Dendritic cell treated with granulocyte-macrophage colony-stimulating factor and Interleukin-4, amounts not matched to agents 40 ng/mL and 50 ng/mL, for 4 days (primary cell): ENCODE measurements at regions of chrX and their contacts with region 1.

Region 1: GRCh38 chrX:20382518-20383297 is 116.0 kb upstream of the RPS6KA3 start:
- H3K4me3 Mint-ChIP-seq: no peak overlapping the region
- H3K27ac Mint-ChIP-seq: no peak overlapping the region
- H3K4me1 Mint-ChIP-seq: no peaks in the 10 kb centered on the region
- H3K27me3 Mint-ChIP-seq: peaks cover 1% of the 10 kb centered on the region

Region 2: DNA sequence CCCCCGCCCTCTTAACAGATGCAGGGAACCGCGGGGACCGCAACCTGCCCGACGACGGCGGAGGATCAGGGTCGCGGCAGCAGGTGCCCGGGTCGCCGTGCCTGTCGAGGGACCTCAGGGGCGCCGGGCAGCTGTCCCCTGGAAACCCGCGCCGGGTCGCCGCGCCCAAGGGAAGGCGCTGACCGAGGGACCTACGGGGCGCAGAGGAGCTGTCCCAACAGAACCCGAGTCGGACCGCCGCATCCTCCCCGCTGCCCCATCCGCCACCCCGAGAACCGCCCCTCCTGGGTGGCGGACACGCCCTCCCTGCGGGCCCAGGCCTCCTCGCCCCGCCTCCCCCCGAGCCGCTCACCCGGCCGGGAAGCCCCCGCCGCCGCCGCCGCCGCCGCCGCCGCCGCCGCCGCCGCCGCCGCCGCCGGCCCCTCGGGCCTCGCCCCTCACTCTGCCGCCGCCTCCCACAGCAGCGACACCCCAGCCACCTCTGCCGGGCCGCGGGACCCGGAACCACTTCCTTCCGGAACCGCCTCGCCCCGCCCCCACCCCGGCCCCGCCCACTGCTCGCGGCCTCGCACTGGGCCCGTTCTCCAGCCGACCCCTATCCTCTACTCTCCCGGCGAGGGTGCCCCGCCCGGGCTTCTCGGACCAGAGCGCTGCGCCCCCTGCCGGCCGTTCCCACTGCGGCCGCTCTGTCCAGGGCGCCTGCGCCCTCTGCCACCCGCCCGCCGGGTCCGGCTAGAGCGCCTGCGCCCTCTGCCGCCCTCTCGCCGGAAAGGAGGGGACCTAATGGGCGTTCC is 392.0 kb before region 1 on chrX and contains the start of gene BCLAF3:
- intact Hi-C with region 1: no loop called
- H3K4me3 Mint-ChIP-seq: peak within 1 kb of the TSS; percentile 78
- H3K27ac Mint-ChIP-seq: peak within 1 kb of the TSS; percentile 82
- H3K4me1 Mint-ChIP-seq: peaks cover 18% of the 10 kb centered on the region
- H3K27me3 Mint-ChIP-seq: no peaks in the 10 kb centered on the region

Region 3: DNA sequence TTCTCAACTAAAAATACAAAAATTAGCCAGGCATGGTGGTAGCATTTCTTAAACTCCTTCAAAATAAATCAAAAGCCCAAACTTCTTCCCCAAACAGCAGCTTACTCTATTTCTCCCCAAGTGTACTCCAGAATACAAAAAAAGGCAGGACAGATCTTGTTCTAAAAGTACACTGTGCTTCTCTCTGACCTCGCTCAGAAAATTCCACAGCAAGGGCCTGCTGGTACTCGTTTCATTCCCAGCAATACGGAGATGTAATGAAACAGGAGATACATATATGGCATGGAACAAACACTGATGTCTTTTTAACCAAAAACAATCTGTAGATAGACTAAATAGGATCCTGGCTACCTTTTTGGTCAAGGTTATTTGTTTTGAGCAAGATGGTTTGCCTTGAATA is 291.2 kb before region 1 on chrX:
- intact Hi-C with region 1: no loop called
- H3K4me3 Mint-ChIP-seq: no peak overlapping the region
- H3K27ac Mint-ChIP-seq: no peak overlapping the region
- H3K4me1 Mint-ChIP-seq: no peaks in the 10 kb centered on the region
- H3K27me3 Mint-ChIP-seq: no peaks in the 10 kb centered on the region

Region 4: DNA sequence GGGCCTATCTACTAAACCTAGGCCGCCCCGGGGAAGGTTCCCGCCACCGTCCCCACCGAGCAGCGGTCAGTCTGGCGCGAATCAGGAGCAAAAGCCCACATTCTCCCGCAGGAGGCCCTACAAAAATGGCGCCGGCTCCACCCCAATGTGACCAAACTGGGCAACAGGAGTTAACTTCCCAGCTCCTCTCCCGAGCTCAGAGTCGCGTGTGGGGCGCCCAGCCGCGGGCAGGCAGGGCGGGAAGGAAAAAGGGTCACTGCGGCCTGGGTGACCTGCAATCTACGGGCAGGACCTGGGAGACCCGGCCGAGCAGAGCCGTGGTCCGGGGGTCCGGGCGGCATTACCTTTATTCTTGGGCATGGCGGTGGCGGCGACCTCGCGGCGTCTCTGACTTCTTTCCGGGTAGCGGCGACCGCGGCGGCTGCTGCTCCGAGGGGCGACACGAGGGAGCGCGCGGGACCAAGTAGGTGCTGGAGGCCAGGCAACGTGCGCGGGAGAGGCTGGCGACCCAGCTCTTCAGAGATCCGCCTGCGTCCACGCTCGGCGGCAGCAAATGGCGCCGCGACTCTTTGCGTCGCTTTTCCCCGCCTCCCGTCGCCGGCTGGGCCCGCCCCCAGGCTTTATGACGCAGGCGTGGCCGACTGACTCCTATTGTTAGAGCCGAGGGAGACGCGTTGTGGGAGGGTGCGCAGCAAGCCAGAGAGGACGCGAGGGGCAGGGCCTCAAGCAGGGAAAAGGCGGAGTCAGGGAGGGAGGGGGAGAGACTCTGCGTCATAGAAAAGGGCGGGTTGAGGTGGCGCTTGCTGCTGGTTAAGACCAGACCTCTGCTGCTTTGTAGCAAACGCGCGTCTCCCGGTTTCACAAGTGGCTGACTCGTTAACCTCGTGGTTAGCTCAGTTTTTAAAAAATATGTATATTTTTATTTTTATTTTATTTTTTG is 241.2 kb before region 1 on chrX and contains the start of gene EIF1AX:
- intact Hi-C with region 1: no loop called
- H3K4me3 Mint-ChIP-seq: peak within 1 kb of the TSS; percentile 85
- H3K27ac Mint-ChIP-seq: peak within 1 kb of the TSS; percentile 93
- H3K4me1 Mint-ChIP-seq: peaks cover 13% of the 10 kb centered on the region
- H3K27me3 Mint-ChIP-seq: no peaks in the 10 kb centered on the region

Region 5: GRCh38 chrX:20320461-20321159 is 62.1 kb before region 1 on chrX:
- intact Hi-C with region 1: loop called (anchors 10 kb)
- H3K4me3 Mint-ChIP-seq: peak overlapping the region; percentile 20
- H3K27ac Mint-ChIP-seq: peak overlapping the region; percentile 83
- H3K4me1 Mint-ChIP-seq: peaks cover 64% of the 10 kb centered on the region
- H3K27me3 Mint-ChIP-seq: no peaks in the 10 kb centered on the region